ENCODE measurements at regions of chr12 and their contacts with region 1.

Region 1: GRCh38 chr12:110501752-110502738 is at the starts of genes RAD9B and VPS29:
- DNase-seq: peak; percentile 98
- ATAC-seq: peak; percentile 91 to 94
- H3K4me3 ChIP-seq: peak within 1 kb of the TSS; percentile 86 to 99 (median 90)
- H3K27ac ChIP-seq: peak within 1 kb of the TSS; percentile 95 to 98 (median 97)
- H3K4me1 ChIP-seq: peaks cover 36 to 40% of the 10 kb centered on the region in 2 donors
- H3K27me3 ChIP-seq: no peaks in the 10 kb centered on the region
- CTCF ChIP-seq: no peak
- POLR2A ChIP-seq: peak; percentile 95 to 97
- total RNA-seq, gene RAD9B: 0.12 to 2.0 (median 0.62) TPM
- total RNA-seq, gene VPS29: 76.4 to 145 (median 92.9) TPM

Region 2: DNA sequence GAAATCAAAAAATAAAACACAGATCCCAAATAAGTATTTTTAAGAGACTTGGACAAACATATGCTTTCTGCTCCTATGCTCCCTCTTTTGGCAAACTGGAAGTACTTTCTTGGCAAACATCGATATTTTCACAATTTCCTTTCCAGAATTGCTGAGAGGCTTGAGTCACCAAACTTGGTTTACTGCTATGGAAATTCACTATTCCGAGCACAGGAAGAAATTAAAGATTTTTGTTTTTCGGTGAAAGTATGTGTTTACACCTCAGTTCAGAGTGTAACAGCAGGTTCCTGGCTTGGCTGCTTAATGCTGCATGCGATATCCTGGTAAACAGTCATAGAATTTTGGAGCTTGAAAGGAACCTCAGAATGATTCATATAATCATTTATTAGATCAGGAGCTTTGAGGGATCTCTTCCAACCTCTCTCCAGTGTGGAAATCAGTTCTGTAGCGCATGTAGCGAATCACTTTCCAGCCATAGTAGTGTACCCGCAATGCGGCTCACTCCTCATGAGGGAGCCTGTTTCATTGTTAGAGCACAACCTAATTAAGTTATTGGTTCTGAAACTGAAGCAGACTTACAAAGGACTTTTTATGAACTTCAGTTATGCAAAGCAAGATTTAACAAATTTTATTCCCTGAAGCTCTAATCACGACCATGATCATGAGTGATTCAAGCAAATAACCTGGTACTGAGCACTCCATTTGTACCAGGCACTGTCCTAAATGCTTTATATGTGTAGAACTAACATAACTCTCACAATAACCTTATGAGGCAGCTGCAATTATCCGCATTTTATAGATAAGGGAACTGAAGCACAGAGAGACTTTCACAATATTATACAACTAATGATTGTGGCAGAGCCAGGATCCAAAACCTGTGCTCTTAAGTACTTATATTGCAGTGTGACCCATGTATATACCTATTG is 277.4 kb before region 1 on chr12:
- in situ Hi-C with region 1: no loop called
- intact Hi-C with region 1: no loop called
- DNase-seq: peak; percentile 36 to 44
- ATAC-seq: peak; percentile 81 to 91
- H3K4me3 ChIP-seq: peak overlapping the region; percentile 4 to 34 (median 18)
- H3K27ac ChIP-seq: peak overlapping the region; percentile 75 to 82 (median 80)
- H3K4me1 ChIP-seq: peaks cover 25 to 41% of the 10 kb centered on the region in 2 donors
- H3K27me3 ChIP-seq: no peaks in the 10 kb centered on the region
- CTCF ChIP-seq: peak in 4 of 5 experiments; percentile 53 to 76 (median 62)
- POLR2A ChIP-seq: no peak

Region 3: GRCh38 chr12:110449799-110450497 is 52.1 kb before region 1 on chr12 and contains the start of gene ARPC3:
- in situ Hi-C with region 1: loop called in 1 of 4 experiments (anchors 10 kb)
- intact Hi-C with region 1: loop called (anchors 1 kb)
- DNase-seq: peak; percentile 89 to 93
- ATAC-seq: peak; percentile 97 to 98
- H3K4me3 ChIP-seq: peak within 1 kb of the TSS; percentile 83 to 99 (median 92)
- H3K27ac ChIP-seq: peak within 1 kb of the TSS; percentile 86 to 97 (median 90)
- H3K4me1 ChIP-seq: peaks cover 7 to 8% of the 10 kb centered on the region in 2 donors
- H3K27me3 ChIP-seq: no peaks in the 10 kb centered on the region
- CTCF ChIP-seq: peak; percentile 81 to 95 (median 87)
- POLR2A ChIP-seq: peak; percentile 43 to 59
- total RNA-seq, gene ARPC3: 170 to 327 (median 213) TPM

Region 4: GRCh38 chr12:110468212-110469048 is 33.6 kb before region 1 on chr12 and contains the starts of genes FAM216A and GPN3:
- in situ Hi-C with region 1: loop called in 1 of 4 experiments (anchors 5 kb)
- intact Hi-C with region 1: loop called (anchors 1 kb)
- DNase-seq: peak; percentile 94 to 97
- ATAC-seq: peak; percentile 94 to 95
- H3K4me3 ChIP-seq: peak within 1 kb of the TSS; percentile 63 to 89 (median 73)
- H3K27ac ChIP-seq: peak within 1 kb of the TSS; percentile 86 to 90 (median 88)
- H3K4me1 ChIP-seq: peaks cover 15 to 25% of the 10 kb centered on the region in 2 donors
- H3K27me3 ChIP-seq: no peaks in the 10 kb centered on the region
- CTCF ChIP-seq: no peak
- POLR2A ChIP-seq: peak; percentile 88 to 89
- total RNA-seq, gene FAM216A: 0.82 to 3.5 (median 2.2) TPM
- total RNA-seq, gene GPN3: 18.4 to 26.8 (median 24.6) TPM

Region 5: DNA sequence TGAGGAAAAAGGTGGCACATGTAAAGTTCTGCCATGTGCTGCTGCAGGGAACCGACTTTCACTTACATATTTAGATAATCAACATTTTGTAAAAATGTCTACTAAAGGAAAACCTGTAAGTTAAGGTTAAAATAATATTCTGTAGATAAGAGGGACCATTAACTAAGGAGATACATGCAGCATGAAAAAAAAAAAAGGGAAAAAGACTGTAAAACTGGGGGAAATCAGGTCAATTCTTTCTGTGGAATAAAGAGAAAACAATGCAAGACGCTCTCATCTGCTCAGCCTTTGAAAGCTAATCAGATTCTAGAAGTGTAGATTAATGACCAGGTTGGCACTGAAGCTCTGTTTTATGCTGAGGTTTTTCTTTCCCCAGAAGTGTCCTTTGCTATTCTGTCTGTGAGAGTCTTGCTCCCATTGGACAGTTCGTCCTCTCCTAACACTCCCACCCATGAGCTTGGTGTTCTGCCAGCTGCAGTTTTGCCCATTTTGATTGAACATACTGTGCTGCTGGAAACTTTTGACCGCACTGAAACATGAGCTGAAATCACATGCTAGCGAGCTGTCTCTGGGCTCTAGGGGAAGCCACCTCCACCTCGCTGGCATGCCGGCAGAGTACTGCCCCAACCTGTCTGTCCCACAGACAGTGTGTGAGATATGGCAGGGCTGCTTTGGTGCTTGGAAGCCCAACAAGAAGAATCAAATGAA is 41.4 kb after region 1 on chr12:
- in situ Hi-C with region 1: no loop called
- intact Hi-C with region 1: loop called (anchors 2 kb)
- DNase-seq: peak; percentile 99
- ATAC-seq: peak; percentile 87 to 92
- H3K4me3 ChIP-seq: peak overlapping the region in 3 of 4 donors; percentile 12 to 22 (median 13)
- H3K27ac ChIP-seq: peak overlapping the region; percentile 89 to 95 (median 94)
- H3K4me1 ChIP-seq: peaks cover 75 to 96% of the 10 kb centered on the region in 2 donors
- H3K27me3 ChIP-seq: no peaks in the 10 kb centered on the region
- CTCF ChIP-seq: no peak
- POLR2A ChIP-seq: peak; percentile 3 to 49

Region 6: DNA sequence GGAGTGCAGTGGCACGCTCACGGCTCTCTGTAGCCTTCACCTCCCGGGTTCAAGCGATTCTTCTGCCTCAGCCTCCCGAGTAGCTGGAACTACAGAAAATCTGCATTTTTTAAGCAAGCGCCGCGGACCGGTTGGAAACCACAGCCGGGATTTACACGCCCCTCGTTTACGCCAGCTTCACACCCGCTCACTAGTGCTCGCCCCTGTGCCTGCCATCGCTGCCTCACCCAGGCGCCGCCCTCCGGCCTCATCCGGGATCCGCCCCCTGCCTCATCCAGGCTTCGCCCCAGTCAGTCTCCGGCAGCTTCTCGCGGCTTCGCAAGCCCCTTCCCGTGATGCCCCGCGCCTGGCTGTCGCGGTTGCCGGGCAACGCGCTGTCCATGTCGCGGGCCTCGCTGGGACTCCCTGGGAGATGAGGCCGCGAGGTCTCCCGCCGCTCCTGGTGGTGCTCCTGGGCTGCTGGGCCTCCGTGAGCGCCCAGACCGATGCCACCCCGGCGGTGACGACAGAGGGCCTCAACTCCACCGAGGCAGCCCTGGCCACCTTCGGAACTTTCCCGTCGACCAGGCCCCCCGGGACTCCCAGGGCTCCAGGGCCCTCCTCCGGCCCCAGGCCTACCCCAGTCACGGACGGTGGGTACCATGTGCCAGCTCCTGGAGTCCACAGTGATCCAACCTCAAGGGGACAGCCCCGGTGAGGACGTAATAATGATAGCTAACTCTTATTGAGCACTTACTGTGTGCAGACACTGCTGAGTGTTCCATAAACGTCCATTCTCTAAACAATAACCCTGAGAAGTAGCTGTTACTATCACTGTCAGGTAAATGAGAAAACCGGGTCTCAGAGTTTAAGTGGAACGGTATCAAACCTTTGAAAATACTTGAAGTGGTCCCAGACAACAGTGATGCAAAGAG is 112.0 kb after region 1 on chr12 and contains the start of gene TCTN1:
- in situ Hi-C with region 1: no loop called
- intact Hi-C with region 1: loop called (anchors 5 kb)
- DNase-seq: peak; percentile 93 to 95
- ATAC-seq: peak; percentile 94 to 97
- H3K4me3 ChIP-seq: peak within 1 kb of the TSS; percentile 67 to 94 (median 86)
- H3K27ac ChIP-seq: peak within 1 kb of the TSS; percentile 55 to 82 (median 70)
- H3K4me1 ChIP-seq: peaks cover 10 to 12% of the 10 kb centered on the region in 2 donors
- H3K27me3 ChIP-seq: no peaks in the 10 kb centered on the region
- CTCF ChIP-seq: peak in 1 of 5 experiments; percentile 23
- POLR2A ChIP-seq: peak; percentile 55 to 66
- total RNA-seq, gene TCTN1: 4.7 to 30.8 (median 22.7) TPM

Region 7: GRCh38 chr12:110742718-110743570 is 240.9 kb after region 1 on chr12 and contains the start of gene PPP1CC:
- in situ Hi-C with region 1: no loop called
- intact Hi-C with region 1: loop called (anchors 5 kb)
- DNase-seq: peak; percentile 89 to 92
- ATAC-seq: peak; percentile 88 to 89
- H3K4me3 ChIP-seq: peak within 1 kb of the TSS; percentile 92 to 100 (median 95)
- H3K27ac ChIP-seq: peak within 1 kb of the TSS; percentile 86 to 98 (median 94)
- H3K4me1 ChIP-seq: peaks cover 48% of the 10 kb centered on the region in 2 donors
- H3K27me3 ChIP-seq: no peaks in the 10 kb centered on the region
- CTCF ChIP-seq: peak in 1 of 5 experiments; percentile 23
- POLR2A ChIP-seq: peak; percentile 80 to 81
- total RNA-seq, gene PPP1CC: 96.4 to 226 (median 154) TPM

Measured in gastrocnemius medialis (tissue), 4 donors.